Activated naive CD4-positive, alpha-beta T cell treated with anti-CD3 and anti-CD28 coated beads, Interleukin-2, amount 10 ng/mL, durations not matched to agents 7 days and 5 days (primary cell): ENCODE measurements at regions of chr17 and their contacts with region 1.

Region 1: GRCh38 chr17:74566132-74566753 is 1.1 kb downstream of the CD300H start:
- DNase-seq: peak; percentile 63
- H3K4me3 Mint-ChIP-seq: no peak overlapping the region
- H3K27ac Mint-ChIP-seq: no peak overlapping the region
- H3K4me1 Mint-ChIP-seq: peaks cover 3% of the 10 kb centered on the region
- H3K27me3 Mint-ChIP-seq: peaks cover 65% of the 10 kb centered on the region

Region 2: DNA sequence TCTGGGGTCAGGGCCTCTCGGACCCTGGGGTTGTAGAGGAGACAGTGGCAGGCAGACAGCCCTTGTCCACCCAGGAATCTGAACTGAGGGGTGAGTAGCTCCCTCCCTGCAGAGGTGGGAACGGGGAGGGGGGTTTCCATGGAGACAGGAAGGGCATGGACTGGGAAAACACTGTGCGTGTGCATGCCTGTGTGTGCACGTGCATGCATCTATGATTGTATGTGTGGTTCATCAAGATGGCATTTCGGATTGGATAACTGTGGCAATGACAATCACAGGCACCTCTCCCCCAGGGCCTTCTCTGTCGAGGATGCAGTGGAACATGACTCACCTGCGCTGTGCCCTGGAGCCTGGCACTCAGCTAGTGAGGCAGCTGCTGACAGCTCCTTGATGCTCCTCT is 14.2 kb before region 1 on chr17:
- CTCF ChIA-PET with region 1: interaction called, 15 read pairs
- DNase-seq: no peak
- H3K4me3 Mint-ChIP-seq: no peak overlapping the region
- H3K27ac Mint-ChIP-seq: no peak overlapping the region
- H3K4me1 Mint-ChIP-seq: peaks cover 15% of the 10 kb centered on the region
- H3K27me3 Mint-ChIP-seq: peaks cover 52% of the 10 kb centered on the region

Region 3: DNA sequence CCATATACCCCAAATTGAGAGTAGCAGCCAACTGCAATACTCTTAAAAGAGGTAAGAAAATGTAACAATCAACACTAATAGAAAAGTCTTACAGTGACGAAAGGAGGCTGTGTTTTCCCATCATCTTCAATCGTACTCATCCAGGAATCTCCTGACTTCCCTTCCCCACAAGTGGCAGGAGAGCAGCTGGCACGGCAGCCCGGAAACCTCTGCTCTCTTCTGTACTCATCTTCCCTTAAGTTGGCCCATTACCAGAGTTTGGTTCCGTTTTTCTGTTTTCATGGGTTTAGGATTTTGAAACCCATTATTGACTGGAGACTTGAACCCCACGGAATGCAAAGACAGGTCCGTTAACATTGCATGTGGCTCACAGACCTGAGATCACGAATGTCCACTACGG is 12.7 kb after region 1 on chr17:
- CTCF ChIA-PET with region 1: interaction called, 10 read pairs
- DNase-seq: no peak
- H3K4me3 Mint-ChIP-seq: no peak overlapping the region
- H3K27ac Mint-ChIP-seq: no peak overlapping the region
- H3K4me1 Mint-ChIP-seq: peaks cover 17% of the 10 kb centered on the region
- H3K27me3 Mint-ChIP-seq: peaks cover 30% of the 10 kb centered on the region

Region 4: DNA sequence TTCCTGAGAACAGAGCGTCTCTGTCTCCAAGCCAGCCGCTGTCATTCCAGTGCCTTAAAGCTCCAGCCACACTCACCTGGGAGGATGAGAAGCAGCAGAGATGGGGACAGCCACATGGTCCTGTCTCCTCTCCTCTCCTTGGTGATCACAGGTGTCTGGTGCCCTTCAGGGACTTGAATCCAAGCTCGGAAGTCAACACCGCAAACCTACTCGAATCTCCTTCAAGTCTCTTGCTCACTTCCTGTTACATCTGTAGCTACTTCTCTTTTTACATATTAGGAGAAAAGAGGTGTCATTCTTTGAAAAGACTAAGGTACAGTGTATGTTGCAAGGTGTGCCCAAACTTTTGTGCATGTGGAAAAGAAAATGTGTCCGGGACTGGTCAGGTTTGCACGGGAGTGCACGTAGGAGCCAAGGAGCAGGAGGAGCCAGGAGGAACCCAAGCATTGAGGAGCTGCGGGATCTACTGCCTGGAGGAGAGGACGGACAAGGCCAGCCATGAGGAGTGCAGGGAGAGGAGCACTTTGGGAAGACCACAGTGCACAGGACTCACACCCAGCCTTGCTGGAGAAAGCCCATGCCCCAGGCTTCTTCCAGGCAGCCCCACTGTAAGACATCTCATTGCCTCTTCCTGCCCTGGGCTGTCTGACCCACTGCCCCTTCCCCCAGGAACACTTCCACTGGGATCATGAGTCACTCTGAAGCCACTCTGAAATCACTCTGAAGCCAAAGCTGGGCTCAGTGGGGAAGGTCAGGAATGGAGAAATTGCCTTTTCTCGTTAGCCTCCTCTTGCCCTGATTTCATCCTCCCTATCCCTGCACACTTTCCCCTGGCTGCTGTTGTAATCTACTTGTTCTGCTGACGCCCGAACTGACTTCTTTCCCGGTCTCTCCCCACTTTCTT is 26.1 kb after region 1 on chr17 and contains the start of gene CD300LD:
- CTCF ChIA-PET with region 1: interaction called, 13 read pairs
- DNase-seq: peak; percentile 28
- H3K4me3 Mint-ChIP-seq: no peak within 1 kb of the TSS
- H3K27ac Mint-ChIP-seq: no peak within 1 kb of the TSS
- H3K4me1 Mint-ChIP-seq: peaks cover 18% of the 10 kb centered on the region
- H3K27me3 Mint-ChIP-seq: peaks cover 38% of the 10 kb centered on the region

Region 5: GRCh38 chr17:74646231-74646630 is 80.0 kb after region 1 on chr17:
- CTCF ChIA-PET with region 1: interaction called, 14 read pairs
- DNase-seq: no peak
- H3K4me3 Mint-ChIP-seq: no peak overlapping the region
- H3K27ac Mint-ChIP-seq: no peak overlapping the region
- H3K4me1 Mint-ChIP-seq: peaks cover 9% of the 10 kb centered on the region
- H3K27me3 Mint-ChIP-seq: peaks cover 94% of the 10 kb centered on the region